ENCODE measurements at regions of chr5 and their contacts with region 1.

Region 1: DNA sequence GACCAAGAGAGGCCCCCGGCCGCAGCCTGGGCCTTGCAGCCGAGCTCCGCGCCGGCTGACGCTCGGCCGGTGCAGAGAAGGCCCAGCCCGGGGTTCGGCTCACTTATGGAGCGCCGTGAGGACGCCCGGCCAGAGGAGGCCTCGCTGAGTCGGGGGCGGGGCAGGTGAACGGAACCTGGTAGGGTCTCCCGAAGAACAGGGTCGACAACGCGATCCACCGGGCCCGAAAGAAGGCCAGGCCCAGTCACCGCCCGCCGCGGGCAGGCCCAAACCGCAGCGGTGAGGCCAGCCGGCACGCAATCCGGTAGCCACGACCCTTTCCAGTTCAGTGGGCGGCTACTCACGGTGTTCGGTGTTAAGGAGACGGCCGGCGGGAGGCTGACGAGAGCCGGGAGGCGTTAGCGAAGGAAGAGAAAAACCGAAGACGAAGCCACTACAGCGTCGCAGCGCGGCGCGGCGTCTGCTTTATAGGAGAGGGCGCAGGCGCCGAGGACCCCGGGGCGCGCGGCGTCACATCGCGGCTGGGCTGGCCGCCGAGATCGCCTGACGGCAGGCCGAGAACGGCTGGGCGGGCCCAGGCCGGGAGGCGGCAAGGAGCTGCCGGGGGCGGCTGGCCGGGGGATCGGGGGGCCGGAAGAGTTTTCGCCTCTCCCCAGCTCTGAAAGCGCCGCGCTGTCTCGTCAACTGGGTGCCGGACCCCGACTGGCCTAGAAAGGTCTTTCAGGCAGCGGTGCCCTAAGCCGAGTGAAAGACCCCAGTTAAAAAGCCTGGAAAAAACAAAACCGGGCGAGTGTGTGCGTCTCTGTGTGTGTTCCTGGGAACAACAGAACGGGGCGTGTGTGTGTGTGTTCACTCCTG is at the start of gene SKP1:
- DNase-seq: peak; percentile 89
- H3K4me3 Mint-ChIP-seq: peak within 1 kb of the TSS; percentile 97
- H3K27ac Mint-ChIP-seq: peak within 1 kb of the TSS; percentile 97
- H3K4me1 Mint-ChIP-seq: peaks cover 28% of the 10 kb centered on the region
- H3K27me3 Mint-ChIP-seq: no peaks in the 10 kb centered on the region
- CTCF ChIP-seq: no peak
- total RNA-seq, gene SKP1: 415 and 488 TPM in 2 replicates

Region 2: GRCh38 chr5:134041570-134042411 is 134.9 kb before region 1 on chr5:
- CTCF ChIA-PET with region 1: interaction called, 16 read pairs
- POLR2A ChIA-PET with region 1: interaction called, 5 read pairs
- intact Hi-C with region 1: no loop called
- DNase-seq: no peak
- H3K4me3 Mint-ChIP-seq: no peak overlapping the region
- H3K27ac Mint-ChIP-seq: no peak overlapping the region
- H3K4me1 Mint-ChIP-seq: peaks cover 11% of the 10 kb centered on the region
- H3K27me3 Mint-ChIP-seq: no peaks in the 10 kb centered on the region
- CTCF ChIP-seq: no peak

Region 3: GRCh38 chr5:134145779-134146581 is 30.8 kb before region 1 on chr5:
- CTCF ChIA-PET with region 1: interaction called, 3 read pairs
- POLR2A ChIA-PET with region 1: interaction called, 55 read pairs
- intact Hi-C with region 1: no loop called
- DNase-seq: peak; percentile 88
- H3K4me3 Mint-ChIP-seq: no peak overlapping the region
- H3K27ac Mint-ChIP-seq: no peak overlapping the region
- H3K4me1 Mint-ChIP-seq: peaks cover 13% of the 10 kb centered on the region
- H3K27me3 Mint-ChIP-seq: no peaks in the 10 kb centered on the region
- CTCF ChIP-seq: peak; percentile 98

Region 4: DNA sequence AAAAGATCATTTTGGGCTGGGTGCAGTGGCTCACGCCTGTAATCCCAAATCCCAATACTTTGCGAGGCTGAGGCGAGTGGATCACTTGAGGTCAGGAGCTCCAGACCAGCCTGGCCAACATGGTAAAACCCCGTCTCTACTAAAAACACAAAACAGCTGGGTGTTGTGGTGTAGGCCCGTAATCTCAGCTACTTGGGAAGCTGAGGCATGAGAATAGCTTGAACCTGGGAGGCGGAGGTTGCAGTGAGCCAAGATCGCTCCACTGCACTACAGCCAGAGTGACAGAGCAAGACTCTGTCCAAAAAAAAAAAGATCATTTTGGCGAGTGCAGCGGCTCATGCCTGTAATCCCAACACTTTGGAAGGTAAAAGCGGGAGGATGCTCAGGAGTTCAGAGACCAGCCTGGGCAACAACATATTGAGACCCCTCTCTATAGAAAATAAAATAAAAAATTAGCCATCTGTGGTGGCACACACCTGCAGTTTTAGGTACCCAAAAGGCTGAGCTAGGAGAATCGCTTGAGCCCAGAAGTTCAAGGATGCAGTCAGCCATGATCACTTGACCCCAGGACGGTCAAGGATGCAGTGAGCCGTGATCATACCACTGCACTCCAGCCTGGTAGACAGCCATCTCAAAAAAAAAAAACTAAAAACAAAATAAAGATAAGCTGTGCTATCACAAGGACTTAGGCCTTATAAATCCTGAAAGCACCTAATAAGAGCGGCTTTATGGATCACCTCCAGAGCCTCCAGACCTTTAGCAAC is 32.9 kb after region 1 on chr5:
- CTCF ChIA-PET with region 1: interaction called, 6 read pairs
- POLR2A ChIA-PET with region 1: interaction called, 10 read pairs
- intact Hi-C with region 1: no loop called
- DNase-seq: no peak
- H3K4me3 Mint-ChIP-seq: no peak overlapping the region
- H3K27ac Mint-ChIP-seq: no peak overlapping the region
- H3K4me1 Mint-ChIP-seq: peaks cover 15% of the 10 kb centered on the region
- H3K27me3 Mint-ChIP-seq: no peaks in the 10 kb centered on the region
- CTCF ChIP-seq: no peak

Region 5: DNA sequence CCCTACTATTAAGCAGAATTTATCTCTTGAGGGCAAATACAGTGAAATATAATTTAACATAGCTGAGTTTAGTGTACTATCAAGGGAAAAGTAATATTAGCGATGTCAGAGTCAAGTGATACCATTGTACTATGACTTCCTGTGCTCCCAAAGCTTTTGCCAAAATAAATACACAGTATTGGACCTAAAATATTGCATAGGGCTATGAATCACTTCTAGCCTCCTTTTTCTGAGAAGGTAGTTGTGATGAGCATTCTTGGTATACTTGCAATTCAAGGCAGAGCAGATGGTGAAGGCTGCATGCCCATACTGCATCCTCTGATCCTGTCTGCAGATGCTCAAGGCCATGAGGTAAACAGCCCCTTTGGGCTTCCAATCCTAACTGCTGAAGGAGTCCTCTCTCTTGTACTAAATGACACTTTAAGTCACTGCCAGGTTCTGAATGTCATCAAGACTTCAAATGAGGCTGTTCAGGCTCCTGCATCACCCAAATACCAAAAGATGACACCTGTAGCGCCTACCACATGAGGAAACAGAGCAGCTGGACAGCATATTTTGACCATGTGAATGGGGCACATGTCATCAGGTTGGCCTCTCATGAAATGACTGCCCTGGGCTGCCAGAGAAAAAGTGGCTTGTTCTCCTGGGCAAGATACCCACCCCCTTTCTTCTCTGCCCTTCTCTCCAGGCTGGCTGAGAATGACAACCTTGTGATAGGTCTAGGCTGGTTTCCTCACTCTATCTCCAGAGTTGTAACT is 78.9 kb after region 1 on chr5:
- CTCF ChIA-PET with region 1: no interaction called
- POLR2A ChIA-PET with region 1: interaction called, 10 read pairs
- intact Hi-C with region 1: no loop called
- DNase-seq: peak; percentile 65
- H3K4me3 Mint-ChIP-seq: no peak overlapping the region
- H3K27ac Mint-ChIP-seq: peak overlapping the region; percentile 33
- H3K4me1 Mint-ChIP-seq: peaks cover 27% of the 10 kb centered on the region
- H3K27me3 Mint-ChIP-seq: no peaks in the 10 kb centered on the region
- CTCF ChIP-seq: no peak

Region 6: DNA sequence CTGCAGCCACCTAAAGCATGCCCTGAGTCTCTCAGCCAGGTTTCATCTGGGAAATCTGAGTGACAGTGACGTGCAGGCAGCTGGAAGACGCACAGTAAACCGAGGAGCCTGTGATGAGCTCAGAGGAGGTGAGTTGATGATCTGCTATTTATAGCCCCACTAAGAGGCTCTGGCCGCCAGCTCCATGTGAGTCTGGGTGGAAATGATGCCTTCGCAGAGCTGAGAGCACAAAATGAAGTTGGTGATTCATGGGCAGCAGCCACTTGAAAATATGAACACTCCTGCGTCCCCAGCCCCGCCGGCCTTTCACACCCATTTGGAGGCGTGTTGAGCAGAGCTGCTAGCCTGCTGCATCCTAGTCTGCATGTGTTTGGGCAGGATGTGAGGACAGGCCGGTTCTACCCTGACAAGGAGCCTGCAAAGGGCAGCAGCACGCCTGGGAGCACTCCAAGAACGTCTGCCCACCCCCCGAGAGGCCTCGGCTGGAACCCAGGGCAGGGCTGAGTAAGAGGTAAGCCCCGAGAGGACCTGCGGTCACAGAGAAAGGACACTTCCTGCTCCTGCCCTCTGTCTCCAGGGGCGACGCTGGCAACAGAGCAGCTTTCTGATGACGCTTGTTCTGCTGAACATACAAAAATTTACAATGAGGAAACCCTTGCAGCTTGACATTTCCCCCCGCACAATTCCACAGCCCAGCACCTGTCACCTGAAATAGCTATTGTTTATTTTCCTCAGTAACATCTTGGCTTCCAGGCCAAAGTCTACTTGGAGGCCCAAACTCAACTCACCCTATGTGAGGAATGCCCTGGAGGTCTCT is 260.0 kb after region 1 on chr5:
- CTCF ChIA-PET with region 1: no interaction called
- POLR2A ChIA-PET with region 1: interaction called, 14 read pairs
- intact Hi-C with region 1: no loop called
- DNase-seq: peak; percentile 96
- H3K4me3 Mint-ChIP-seq: peak overlapping the region; percentile 63
- H3K27ac Mint-ChIP-seq: peak overlapping the region; percentile 98
- H3K4me1 Mint-ChIP-seq: peaks cover 72% of the 10 kb centered on the region
- H3K27me3 Mint-ChIP-seq: no peaks in the 10 kb centered on the region
- CTCF ChIP-seq: no peak

Region 7: GRCh38 chr5:134527146-134527960 is 350.6 kb after region 1 on chr5:
- CTCF ChIA-PET with region 1: no interaction called
- POLR2A ChIA-PET with region 1: interaction called, 14 read pairs
- intact Hi-C with region 1: no loop called
- DNase-seq: peak; percentile 93
- H3K4me3 Mint-ChIP-seq: peak overlapping the region; percentile 91
- H3K27ac Mint-ChIP-seq: peak overlapping the region; percentile 49
- H3K4me1 Mint-ChIP-seq: peaks cover 50% of the 10 kb centered on the region
- H3K27me3 Mint-ChIP-seq: no peaks in the 10 kb centered on the region
- CTCF ChIP-seq: peak; percentile 94